ENCODE measurements at regions of chr1 and their contacts with region 1.

Region 1: GRCh38 chr1:26126321-26127084 is 14.9 kb downstream of the PDIK1L start:
- DNase-seq: peak; percentile 11 to 91 (median 58)
- ATAC-seq: peak; percentile 96 to 99 (median 99)
- H3K4me3 ChIP-seq: peak overlapping the region; percentile 25 to 51
- H3K4me3 Mint-ChIP-seq: peak overlapping the region; percentile 72 to 84 (median 81)
- H3K27ac ChIP-seq: peak overlapping the region; percentile 54
- H3K27ac Mint-ChIP-seq: peak overlapping the region; percentile 96 to 98
- H3K4me1 ChIP-seq: peaks cover 21 to 32% of the 10 kb centered on the region in 2 experiments
- H3K4me1 Mint-ChIP-seq: peaks cover 46 to 61% (median 59%) of the 10 kb centered on the region in 3 donors
- H3K27me3 ChIP-seq: peaks cover 0 to 3% of the 10 kb centered on the region in 2 experiments
- H3K27me3 Mint-ChIP-seq: no peaks in the 10 kb centered on the region

Region 2: GRCh38 chr1:26111530-26112406 is 14.7 kb before region 1 on chr1 and contains the start of gene PDIK1L:
- CTCF ChIA-PET with region 1: interaction called in 1 of 2 experiments, 8 read pairs
- POLR2A ChIA-PET with region 1: interaction called in 1 of 2 experiments, 11 read pairs
- DNase-seq: peak; percentile 89 to 98 (median 94)
- ATAC-seq: peak; percentile 86 to 89 (median 88)
- H3K4me3 ChIP-seq: peak within 1 kb of the TSS; percentile 87 to 99
- H3K4me3 Mint-ChIP-seq: peak within 1 kb of the TSS; percentile 85 to 95 (median 91)
- H3K27ac ChIP-seq: peak within 1 kb of the TSS; percentile 34
- H3K27ac Mint-ChIP-seq: peak within 1 kb of the TSS; percentile 90 to 94
- H3K4me1 ChIP-seq: peaks cover 7 to 16% of the 10 kb centered on the region in 2 experiments
- H3K4me1 Mint-ChIP-seq: peaks cover 26 to 39% (median 36%) of the 10 kb centered on the region in 3 donors
- H3K27me3 ChIP-seq: no peaks in the 10 kb centered on the region
- H3K27me3 Mint-ChIP-seq: no peaks in the 10 kb centered on the region
- total RNA-seq, gene PDIK1L: 8.8 to 23.6 (median 19.1) TPM

Region 3: DNA sequence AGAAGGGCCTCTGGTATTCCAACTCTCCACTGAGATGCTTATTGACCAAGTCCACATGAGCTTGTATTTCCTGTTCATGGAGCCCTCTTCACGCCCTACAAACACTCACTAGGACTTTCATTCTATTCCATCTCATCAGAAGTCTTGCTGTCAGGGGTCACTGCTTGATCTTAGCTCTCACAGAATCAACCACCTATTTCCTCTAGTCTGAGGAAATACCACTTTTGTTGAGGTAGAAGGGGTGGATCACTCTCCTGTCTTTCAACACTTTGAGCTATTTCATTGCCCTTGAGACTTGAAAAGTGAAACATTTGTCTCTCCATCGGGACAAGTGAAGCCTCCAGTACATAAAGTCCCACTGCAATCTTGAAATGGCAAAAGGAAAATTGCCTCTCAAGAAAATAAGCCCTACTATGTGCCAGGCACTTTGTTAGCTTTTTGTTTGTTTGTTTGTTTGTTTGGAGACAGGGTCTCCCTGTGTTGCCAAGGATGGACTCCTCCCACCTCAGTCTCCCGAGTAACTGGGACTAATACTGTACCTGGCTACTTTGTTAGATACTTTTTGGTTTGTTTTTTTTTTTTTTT is 12.6 kb after region 1 on chr1:
- CTCF ChIA-PET with region 1: interaction called, 6 to 43 read pairs
- POLR2A ChIA-PET with region 1: interaction called, 5 to 7 read pairs
- DNase-seq: peak in 1 of 35 experiments; percentile 28
- ATAC-seq: peak; percentile 27 to 83 (median 72)
- H3K4me3 ChIP-seq: no peak overlapping the region
- H3K4me3 Mint-ChIP-seq: no peak overlapping the region
- H3K27ac ChIP-seq: no peak overlapping the region
- H3K27ac Mint-ChIP-seq: peak overlapping the region; percentile 44 to 81
- H3K4me1 ChIP-seq: peaks cover 0 to 5% of the 10 kb centered on the region in 2 experiments
- H3K4me1 Mint-ChIP-seq: peaks cover 7 to 14% (median 12%) of the 10 kb centered on the region in 3 donors
- H3K27me3 ChIP-seq: no peaks in the 10 kb centered on the region
- H3K27me3 Mint-ChIP-seq: no peaks in the 10 kb centered on the region

Region 4: DNA sequence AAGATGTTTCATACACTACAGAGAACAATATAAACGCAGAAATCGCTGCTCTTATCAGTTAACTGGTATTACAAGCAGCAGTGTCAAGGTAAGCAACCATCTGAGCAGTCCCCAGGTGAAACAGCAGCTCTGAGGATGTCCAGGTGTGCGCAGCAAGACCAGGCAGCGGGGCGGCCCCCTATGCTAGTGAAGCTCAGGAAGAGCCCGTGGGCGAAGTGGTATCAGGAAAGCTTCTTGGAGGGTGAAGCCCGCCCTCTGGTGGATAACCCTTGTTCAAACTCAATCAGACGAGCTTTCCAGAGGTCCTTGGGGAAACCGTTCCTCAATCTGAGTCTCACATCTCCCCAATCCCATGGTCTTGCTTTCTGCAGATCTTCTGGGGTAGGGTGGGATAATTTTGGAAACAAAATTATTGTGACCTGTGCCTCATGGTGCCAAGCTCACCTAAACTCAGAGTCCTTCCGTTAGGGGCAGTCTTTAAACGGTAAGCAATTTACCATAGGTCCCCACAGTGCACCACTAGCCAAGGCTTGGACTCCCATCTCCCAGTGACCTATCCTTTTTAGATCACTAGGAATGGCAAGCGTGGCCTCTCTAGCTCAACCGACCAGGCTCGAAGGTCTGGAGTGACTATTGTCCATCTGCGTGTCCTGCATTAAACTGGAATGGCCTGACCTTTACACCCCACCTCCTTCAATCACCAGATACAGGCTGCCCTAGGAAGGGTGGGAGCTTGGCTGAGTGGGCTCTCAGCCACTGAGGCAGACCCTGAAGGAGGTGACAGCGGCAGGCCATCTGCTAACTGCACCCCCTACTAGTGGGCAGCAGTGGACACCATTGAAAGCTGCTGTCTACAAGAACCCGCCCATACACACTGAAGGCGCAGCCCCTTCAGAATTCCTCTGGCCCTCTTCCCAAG is 18.8 kb after region 1 on chr1:
- CTCF ChIA-PET with region 1: interaction called, 6 to 43 read pairs
- POLR2A ChIA-PET with region 1: interaction called, 4 to 5 read pairs
- DNase-seq: peak; percentile 28 to 88 (median 65)
- ATAC-seq: peak; percentile 81 to 96 (median 88)
- H3K4me3 ChIP-seq: no peak overlapping the region
- H3K4me3 Mint-ChIP-seq: no peak overlapping the region
- H3K27ac ChIP-seq: no peak overlapping the region
- H3K27ac Mint-ChIP-seq: peak overlapping the region in 1 of 2 donors; percentile 61
- H3K4me1 ChIP-seq: peaks cover 0 to 3% of the 10 kb centered on the region in 2 experiments
- H3K4me1 Mint-ChIP-seq: peaks cover 6 to 7% (median 6%) of the 10 kb centered on the region in 3 donors
- H3K27me3 ChIP-seq: peaks cover 0 to 21% of the 10 kb centered on the region in 2 experiments
- H3K27me3 Mint-ChIP-seq: peaks cover 4 to 14% of the 10 kb centered on the region in 2 donors

Region 5: DNA sequence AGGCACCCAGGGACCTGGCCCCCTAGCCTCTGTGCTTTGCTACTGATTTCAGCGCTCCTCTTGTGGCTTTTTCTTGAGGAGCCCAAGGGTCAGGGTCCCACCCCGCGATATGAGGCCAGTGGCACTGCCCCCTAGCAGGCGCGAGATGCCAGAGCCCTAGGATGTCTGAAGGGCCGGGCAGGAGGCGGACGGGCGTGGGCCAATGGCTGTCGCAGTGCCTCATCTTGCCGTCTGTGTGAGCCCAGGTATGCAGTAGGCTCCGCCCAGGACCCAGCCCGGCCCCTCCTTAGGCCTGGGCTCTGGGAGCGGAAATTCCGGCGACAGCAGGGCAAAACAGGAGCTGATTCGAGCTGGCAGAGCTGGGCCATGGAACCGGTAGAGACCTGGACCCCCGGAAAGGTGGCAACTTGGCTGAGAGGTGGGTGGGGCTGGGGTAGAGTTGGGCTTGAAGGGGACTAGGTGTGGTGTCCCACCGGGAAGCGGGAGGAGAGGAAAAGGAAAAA is 50.7 kb after region 1 on chr1 and contains the start of gene CNKSR1:
- CTCF ChIA-PET with region 1: no interaction called
- POLR2A ChIA-PET with region 1: no interaction called
- DNase-seq: peak in 1 of 35 experiments; percentile 13
- ATAC-seq: peak in 2 of 4 experiments; percentile 54 to 61
- H3K4me3 ChIP-seq: no peak within 1 kb of the TSS
- H3K4me3 Mint-ChIP-seq: peak within 1 kb of the TSS in 2 of 3 donors; percentile 41 to 60
- H3K27ac ChIP-seq: no peak within 1 kb of the TSS
- H3K27ac Mint-ChIP-seq: no peak within 1 kb of the TSS
- H3K4me1 ChIP-seq: peaks cover 0 to 8% of the 10 kb centered on the region in 2 experiments
- H3K4me1 Mint-ChIP-seq: peaks cover 0 to 2% (median 0%) of the 10 kb centered on the region in 3 donors
- H3K27me3 ChIP-seq: no peaks in the 10 kb centered on the region
- H3K27me3 Mint-ChIP-seq: no peaks in the 10 kb centered on the region
- total RNA-seq, gene CNKSR1: 2.9 to 6.8 (median 3.6) TPM

Region 6: GRCh38 chr1:26306290-26307229 is 180.1 kb after region 1 on chr1 and contains the start of gene UBXN11:
- CTCF ChIA-PET with region 1: no interaction called
- POLR2A ChIA-PET with region 1: interaction called, 6 to 17 read pairs
- DNase-seq: peak; percentile 75 to 96 (median 90)
- ATAC-seq: peak; percentile 94 to 98 (median 98)
- H3K4me3 ChIP-seq: peak within 1 kb of the TSS; percentile 74 to 79
- H3K4me3 Mint-ChIP-seq: peak within 1 kb of the TSS; percentile 95 to 99 (median 99)
- H3K27ac ChIP-seq: peak within 1 kb of the TSS; percentile 67
- H3K27ac Mint-ChIP-seq: peak within 1 kb of the TSS; percentile 97 to 99
- H3K4me1 ChIP-seq: peaks cover 28 to 42% of the 10 kb centered on the region in 2 experiments
- H3K4me1 Mint-ChIP-seq: peaks cover 30 to 37% (median 32%) of the 10 kb centered on the region in 3 donors
- H3K27me3 ChIP-seq: no peaks in the 10 kb centered on the region
- H3K27me3 Mint-ChIP-seq: no peaks in the 10 kb centered on the region
- total RNA-seq, gene UBXN11: 39.5 to 112 (median 104) TPM